ENCODE measurements at regions of chr17 and their contacts with region 1.

Region 1: DNA sequence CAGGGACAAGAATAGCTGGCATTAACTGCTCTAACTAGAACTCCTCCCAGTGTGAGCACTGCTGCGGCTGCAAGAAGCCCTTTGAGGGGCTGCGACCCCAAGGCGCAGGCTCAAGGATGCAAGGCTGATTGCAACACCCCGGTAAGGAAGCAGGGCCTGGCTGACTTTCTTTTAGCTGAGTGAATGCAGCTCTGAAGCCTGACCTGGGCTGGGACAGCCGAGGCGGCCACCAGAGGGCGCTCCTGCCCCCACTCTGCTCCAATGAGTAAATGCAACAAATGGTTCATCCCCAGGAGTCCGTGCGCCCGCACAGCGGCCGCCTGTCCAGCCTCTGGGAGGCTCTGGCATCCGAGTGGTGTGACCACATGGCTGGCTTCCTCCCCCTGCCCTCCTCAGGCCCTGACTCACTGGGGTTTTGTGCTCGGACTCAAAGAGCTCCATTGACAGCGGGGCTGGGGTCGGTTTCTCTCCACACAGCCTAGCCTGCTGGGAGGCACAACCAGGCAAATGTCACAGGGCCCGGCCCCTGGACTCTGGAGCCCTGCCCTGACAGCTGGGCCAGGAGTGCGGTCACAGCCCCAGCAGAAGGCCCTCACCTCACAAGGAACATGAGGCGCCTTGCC is at the start of gene SMIM5:
- DNase-seq: peak; percentile 62
- H3K4me3 ChIP-seq: no peak within 1 kb of the TSS
- H3K27ac ChIP-seq: peak within 1 kb of the TSS; percentile 70
- H3K27me3 ChIP-seq: no peaks in the 10 kb centered on the region
- CTCF ChIP-seq: peak; percentile 93
- polyA plus RNA-seq, gene SMIM5: not detected in 2 replicates

Region 2: DNA sequence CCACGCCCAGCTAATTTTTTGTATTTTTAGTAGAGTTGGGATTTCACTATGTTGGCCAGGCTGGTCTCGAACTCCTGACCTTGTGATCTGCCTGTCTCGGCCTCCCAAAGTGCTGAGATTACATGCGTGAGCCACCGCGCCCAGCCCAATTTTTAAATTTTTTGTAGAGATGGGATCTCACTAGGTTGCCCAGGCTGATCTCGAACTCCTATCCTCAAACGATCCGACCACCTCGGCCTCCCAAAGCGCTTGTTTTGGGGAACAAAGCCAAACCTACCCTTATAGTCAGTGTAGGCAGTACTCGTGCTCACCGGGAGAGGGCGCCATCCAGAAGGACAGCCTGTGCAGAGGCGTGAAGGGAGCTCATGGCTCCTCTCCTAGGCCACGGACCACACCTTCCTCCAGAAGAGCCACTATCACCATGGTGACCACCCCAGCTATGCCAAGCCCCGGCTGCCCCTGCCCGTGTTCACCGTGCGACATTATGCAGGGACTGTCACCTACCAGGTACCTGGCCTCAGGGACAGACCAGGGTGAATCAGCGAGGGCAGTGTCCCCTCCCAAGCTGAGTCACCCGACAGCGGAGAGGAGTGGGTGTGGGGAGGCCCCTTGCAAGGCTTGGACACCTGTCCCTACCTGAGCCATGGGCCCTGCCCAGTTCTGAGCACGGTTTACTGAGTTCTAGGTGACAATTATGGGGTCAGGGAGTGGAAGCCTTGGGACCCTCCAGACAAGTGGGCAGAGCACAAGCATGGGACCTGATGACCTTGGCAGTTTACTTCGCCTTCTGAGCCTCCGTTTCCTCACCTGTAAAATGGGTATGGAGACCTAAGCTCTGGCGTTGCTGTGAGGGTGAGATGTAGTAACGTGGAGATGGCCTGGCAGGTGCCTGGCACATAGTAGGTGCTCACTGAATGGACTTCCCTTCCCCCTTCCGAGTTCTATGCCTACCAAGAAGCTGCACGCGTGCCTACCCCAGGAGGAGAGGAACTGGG is 31.6 kb before region 1 on chr17:
- CTCF ChIA-PET with region 1: interaction called, 15 read pairs
- POLR2A ChIA-PET with region 1: no interaction called
- DNase-seq: no peak
- H3K4me3 ChIP-seq: no peak overlapping the region
- H3K27ac ChIP-seq: no peak overlapping the region
- H3K27me3 ChIP-seq: peaks cover 2% of the 10 kb centered on the region
- CTCF ChIP-seq: peak; percentile 58

Region 3: GRCh38 chr17:75652915-75653549 is 20.1 kb after region 1 on chr17:
- CTCF ChIA-PET with region 1: interaction called, 226 read pairs
- POLR2A ChIA-PET with region 1: interaction called, 4 read pairs
- DNase-seq: no peak
- H3K4me3 ChIP-seq: no peak overlapping the region
- H3K27ac ChIP-seq: no peak overlapping the region
- H3K27me3 ChIP-seq: no peaks in the 10 kb centered on the region
- CTCF ChIP-seq: peak; percentile 88

Region 4: DNA sequence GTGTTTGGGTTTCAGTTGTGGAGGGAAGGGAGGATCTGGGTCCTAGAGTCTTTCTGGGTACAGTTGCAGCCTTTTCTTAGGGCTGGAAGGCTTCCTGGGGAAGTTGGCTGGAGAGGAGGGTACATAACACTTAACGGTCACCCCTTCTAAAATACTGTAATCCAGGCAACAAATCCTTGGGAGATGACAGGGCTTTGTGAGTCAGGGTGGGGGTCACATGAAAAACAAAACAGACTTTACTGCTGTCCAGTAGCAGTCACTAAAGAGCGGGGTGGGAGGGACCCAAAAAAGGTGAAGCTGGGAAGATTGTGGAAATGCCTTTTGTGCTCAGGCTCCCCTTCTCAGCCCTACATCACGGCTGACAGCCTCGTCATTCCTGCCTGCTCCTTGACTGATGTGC is 40.5 kb after region 1 on chr17:
- CTCF ChIA-PET with region 1: interaction called, 14 read pairs
- POLR2A ChIA-PET with region 1: no interaction called
- DNase-seq: no peak
- H3K4me3 ChIP-seq: no peak overlapping the region
- H3K27ac ChIP-seq: no peak overlapping the region
- H3K27me3 ChIP-seq: no peaks in the 10 kb centered on the region
- CTCF ChIP-seq: no peak

Region 5: DNA sequence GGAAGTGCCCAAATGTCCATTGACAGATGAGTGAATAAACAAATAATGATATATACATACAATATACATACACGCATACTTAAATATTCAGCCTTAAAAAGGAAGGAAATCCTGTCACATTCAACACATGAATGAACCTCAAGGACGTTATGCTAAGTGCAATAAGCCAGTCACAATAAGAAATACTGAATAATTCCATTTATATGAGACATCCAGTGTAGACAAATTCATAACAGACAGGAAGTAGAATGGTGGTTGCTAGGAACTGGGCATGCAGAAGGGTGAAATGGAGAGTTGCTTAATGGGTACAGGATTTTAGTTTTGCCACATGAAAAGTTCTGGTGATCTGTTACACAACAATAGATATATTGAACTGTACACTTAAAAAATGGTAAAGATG is 79.5 kb after region 1 on chr17:
- CTCF ChIA-PET with region 1: interaction called, 11 read pairs
- POLR2A ChIA-PET with region 1: no interaction called
- DNase-seq: no peak
- H3K4me3 ChIP-seq: no peak overlapping the region
- H3K27ac ChIP-seq: no peak overlapping the region
- H3K27me3 ChIP-seq: no peaks in the 10 kb centered on the region
- CTCF ChIP-seq: no peak

Measured in AG04450 (cell line).